Right lobe of liver (tissue), 6 donors: ENCODE measurements at regions of chr13 and their contacts with region 1.

Region 1: GRCh38 chr13:23871616-23872220 is 17.5 kb downstream of the MIPEP start:
- DNase-seq: no peak
- ATAC-seq: peak; percentile 43 to 69 (median 63)
- H3K4me3 ChIP-seq: no peak overlapping the region
- H3K27ac ChIP-seq: no peak overlapping the region
- H3K4me1 ChIP-seq: no peaks in the 10 kb centered on the region
- H3K27me3 ChIP-seq: no peaks in the 10 kb centered on the region
- CTCF ChIP-seq: peak; percentile 54 to 64 (median 58)
- POLR2A ChIP-seq: no peak

Region 2: GRCh38 chr13:23268441-23268840 is 603.3 kb before region 1 on chr13:
- intact Hi-C with region 1: no loop called
- DNase-seq: no peak
- ATAC-seq: no peak
- H3K4me3 ChIP-seq: no peak overlapping the region
- H3K27ac ChIP-seq: no peak overlapping the region
- H3K4me1 ChIP-seq: no peaks in the 10 kb centered on the region
- H3K27me3 ChIP-seq: no peaks in the 10 kb centered on the region
- CTCF ChIP-seq: no peak
- POLR2A ChIP-seq: no peak

Region 3: DNA sequence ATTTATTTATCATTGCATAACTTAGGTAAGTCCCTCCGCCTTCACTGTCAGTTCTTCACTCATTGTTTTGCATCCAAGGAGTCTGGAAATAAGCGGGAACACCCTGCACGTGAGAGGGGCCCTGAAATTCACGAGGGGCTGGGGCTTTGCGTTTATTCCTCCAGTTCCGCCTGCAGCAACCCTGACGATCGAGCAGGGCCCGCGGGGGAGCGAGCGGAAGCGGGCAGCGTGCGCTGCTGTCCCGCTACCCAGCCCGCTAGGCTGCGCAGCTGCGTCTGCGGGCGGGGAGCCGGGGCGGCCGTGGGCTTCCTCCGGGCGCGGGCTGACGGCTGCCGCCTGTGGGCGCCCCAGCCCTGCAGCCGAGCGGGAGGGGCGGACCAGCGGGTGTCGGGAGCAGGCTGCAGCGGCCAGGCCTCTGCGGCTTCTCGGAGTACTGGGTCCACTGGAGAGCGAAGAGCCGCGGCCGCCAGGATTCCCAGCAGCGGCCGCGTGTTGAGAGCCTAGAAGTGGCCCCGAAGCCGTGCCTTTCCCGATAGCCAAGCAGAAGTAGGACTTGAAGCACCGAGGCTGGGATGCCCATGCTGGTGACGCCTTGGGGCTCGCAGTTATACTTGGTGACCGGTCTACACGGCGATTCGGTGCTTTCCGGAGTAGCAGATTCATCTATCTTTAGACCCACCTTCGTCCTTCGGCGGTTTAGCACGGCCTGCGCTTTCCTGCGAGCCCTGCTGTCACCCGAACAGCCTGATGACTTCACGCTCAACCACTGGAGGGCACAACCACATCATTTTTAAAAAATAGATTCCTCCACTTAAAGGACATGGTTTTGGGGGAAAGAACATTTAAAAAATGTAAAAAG is 405.3 kb before region 1 on chr13:
- intact Hi-C with region 1: loop called in 1 of 2 experiments (anchors 10 kb)
- DNase-seq: peak; percentile 63 to 73 (median 64)
- ATAC-seq: peak; percentile 88 to 95 (median 94)
- H3K4me3 ChIP-seq: peak overlapping the region; percentile 33 to 56 (median 48)
- H3K27ac ChIP-seq: peak overlapping the region in 1 of 3 donors; percentile 34
- H3K4me1 ChIP-seq: peaks cover 0 to 5% (median 3%) of the 10 kb centered on the region in 4 donors
- H3K27me3 ChIP-seq: no peaks in the 10 kb centered on the region
- CTCF ChIP-seq: peak; percentile 47 to 54 (median 51)
- POLR2A ChIP-seq: no peak